Panc1 (cell line): ENCODE measurements at regions of chr19 and their contacts with region 1.

Region 1: GRCh38 chr19:39671738-39672363 is 16.1 kb downstream of the LGALS16 start:
- DNase-seq: peak; percentile 100
- ATAC-seq: peak; percentile 95
- H3K4me3 ChIP-seq: no peak overlapping the region
- H3K27ac ChIP-seq: no peak overlapping the region
- H3K4me1 ChIP-seq: peaks cover 11% of the 10 kb centered on the region
- H3K27me3 ChIP-seq: peaks cover 57% of the 10 kb centered on the region
- CTCF ChIP-seq: no peak

Region 2: DNA sequence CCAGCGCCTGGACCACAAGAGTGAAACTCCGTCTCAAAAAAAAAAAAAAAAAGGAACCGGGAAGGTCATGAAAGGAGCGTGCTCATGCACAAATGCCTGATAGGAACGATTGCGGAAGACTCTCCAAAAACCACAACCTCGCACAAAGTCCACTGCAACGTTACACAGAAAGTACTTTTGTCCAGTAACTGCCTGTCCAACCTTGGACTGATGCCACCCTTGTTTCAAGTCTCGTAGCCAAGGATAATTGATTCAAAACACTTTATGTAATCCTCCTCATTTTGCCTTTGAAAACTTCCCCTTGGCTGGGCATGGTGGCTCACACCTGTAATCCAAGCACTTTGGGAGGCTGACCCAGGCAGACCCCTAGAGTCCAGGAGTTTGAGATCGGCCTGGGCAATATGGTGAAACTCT is 912.3 kb before region 1 on chr19:
- CTCF ChIA-PET with region 1: no interaction called
- POLR2A ChIA-PET with region 1: no interaction called
- in situ Hi-C with region 1: no loop called
- intact Hi-C with region 1: no loop called
- DNase-seq: no peak
- ATAC-seq: no peak
- H3K4me3 ChIP-seq: no peak overlapping the region
- H3K27ac ChIP-seq: no peak overlapping the region
- H3K4me1 ChIP-seq: no peaks in the 10 kb centered on the region
- H3K27me3 ChIP-seq: no peaks in the 10 kb centered on the region
- CTCF ChIP-seq: no peak

Region 3: DNA sequence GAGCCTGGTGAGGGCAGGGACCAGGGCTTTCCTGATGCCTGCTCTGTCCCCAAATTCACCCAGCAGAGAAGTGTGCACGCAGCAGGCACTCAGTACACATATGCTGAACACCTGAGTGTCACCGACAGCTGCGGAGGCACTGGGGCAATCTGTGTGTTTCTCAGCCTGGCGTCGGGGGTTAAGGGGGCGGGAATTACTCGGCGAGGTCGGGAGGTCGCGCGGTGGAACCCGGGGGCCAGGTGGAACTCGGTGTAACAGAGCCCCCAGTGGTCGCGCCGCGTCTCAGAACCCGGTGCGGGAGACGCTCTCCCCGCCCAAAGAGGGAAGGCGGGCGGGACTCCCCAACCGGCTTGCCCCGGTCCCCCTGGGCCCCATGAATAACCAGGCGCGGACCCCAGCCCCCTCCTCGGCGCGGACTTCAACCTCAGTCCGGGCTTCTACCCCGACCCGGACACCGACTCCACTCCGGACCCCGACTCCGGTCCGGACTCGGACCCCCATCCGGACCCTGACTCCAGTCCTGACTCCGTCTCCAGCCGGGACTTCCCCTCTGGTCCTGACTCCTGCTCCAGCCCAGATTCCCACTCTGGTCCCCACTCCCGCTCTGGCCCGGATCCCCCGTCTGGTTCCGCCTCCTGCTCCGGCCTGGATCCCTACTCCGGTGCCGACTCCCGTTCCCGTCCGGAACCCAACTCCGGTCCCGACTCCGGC is 156.9 kb before region 1 on chr19 and contains the start of gene SELENOV:
- CTCF ChIA-PET with region 1: interaction called, 13 read pairs
- POLR2A ChIA-PET with region 1: interaction called, 3 read pairs
- in situ Hi-C with region 1: no loop called
- intact Hi-C with region 1: no loop called
- DNase-seq: no peak
- ATAC-seq: peak; percentile 56
- H3K4me3 ChIP-seq: peak within 1 kb of the TSS; percentile 30 to 55
- H3K27ac ChIP-seq: peak within 1 kb of the TSS; percentile 5
- H3K4me1 ChIP-seq: peaks cover 26% of the 10 kb centered on the region
- H3K27me3 ChIP-seq: peaks cover 23% of the 10 kb centered on the region
- CTCF ChIP-seq: no peak
- total RNA-seq, gene SELENOV: 0.80 TPM

Region 4: DNA sequence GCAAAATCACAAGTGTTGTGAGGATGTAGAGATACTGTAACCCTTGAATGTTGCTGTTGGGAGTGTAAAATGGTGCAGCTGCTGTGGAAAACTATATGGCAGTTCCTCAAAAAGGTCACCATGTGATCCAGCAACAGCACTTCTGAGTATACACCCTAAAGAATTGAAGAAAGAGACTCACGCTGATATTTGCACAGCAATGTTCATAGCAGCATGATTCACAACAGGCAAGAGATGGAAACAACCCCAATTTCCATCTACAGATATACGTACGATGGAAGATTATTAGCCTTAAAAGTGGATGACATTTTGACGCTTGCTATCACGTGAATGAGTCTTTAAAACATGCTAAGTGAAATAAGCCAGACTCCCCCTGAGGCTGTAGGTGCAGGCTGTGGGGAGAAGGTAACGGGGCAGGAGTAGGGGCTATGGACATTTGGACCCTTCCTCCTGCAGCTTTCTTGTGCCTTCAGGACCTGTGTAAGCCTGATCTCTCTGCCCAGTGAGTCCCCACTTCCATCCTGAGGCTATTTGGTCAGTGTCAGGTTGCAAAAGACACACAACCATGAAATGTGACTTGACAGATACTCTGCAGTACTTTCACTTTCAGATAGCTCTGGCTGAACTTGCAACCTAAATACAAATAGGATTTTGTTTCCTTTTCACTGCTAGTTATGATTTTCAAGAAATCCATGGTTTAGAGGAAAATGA is 114.3 kb before region 1 on chr19:
- CTCF ChIA-PET with region 1: interaction called, 508 read pairs
- POLR2A ChIA-PET with region 1: no interaction called
- in situ Hi-C with region 1: no loop called
- intact Hi-C with region 1: no loop called
- DNase-seq: peak; percentile 91
- ATAC-seq: peak; percentile 82
- H3K4me3 ChIP-seq: peak overlapping the region; percentile 0 to 36; a peak in 3 of 4 replicates
- H3K27ac ChIP-seq: peak overlapping the region; percentile 0; the same call in 1 of the 2 replicates
- H3K4me1 ChIP-seq: peaks cover 17% of the 10 kb centered on the region
- H3K27me3 ChIP-seq: peaks cover 43% of the 10 kb centered on the region
- CTCF ChIP-seq: no peak

Region 5: DNA sequence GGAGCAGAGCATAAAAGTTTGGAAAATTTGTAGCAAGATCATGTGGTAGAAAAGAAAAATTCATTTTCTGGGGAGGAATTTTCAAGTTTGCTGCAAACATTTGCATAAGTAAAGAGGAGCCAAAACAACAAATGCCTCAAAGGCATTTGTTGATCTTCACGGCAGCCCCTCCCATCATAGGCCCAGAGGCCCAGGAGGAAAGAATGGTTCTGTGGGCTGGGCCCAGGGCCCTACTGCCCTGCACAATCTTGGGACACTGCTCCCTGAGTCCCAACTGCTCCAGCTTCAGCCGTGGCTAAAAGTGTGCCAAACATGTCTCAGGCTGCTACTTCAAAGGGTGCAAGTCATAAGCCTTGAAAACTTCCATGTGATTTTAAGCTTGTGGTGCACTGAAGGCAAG is 58.3 kb before region 1 on chr19:
- CTCF ChIA-PET with region 1: no interaction called
- POLR2A ChIA-PET with region 1: no interaction called
- in situ Hi-C with region 1: no loop called
- intact Hi-C with region 1: no loop called
- DNase-seq: no peak
- ATAC-seq: no peak
- H3K4me3 ChIP-seq: no peak overlapping the region
- H3K27ac ChIP-seq: no peak overlapping the region
- H3K4me1 ChIP-seq: no peaks in the 10 kb centered on the region
- H3K27me3 ChIP-seq: peaks cover 48% of the 10 kb centered on the region
- CTCF ChIP-seq: no peak

Region 6: GRCh38 chr19:39641773-39642172 is 30.1 kb before region 1 on chr19:
- CTCF ChIA-PET with region 1: no interaction called
- POLR2A ChIA-PET with region 1: interaction called, 12 read pairs
- in situ Hi-C with region 1: loop called (anchors 5 kb)
- intact Hi-C with region 1: no loop called
- DNase-seq: no peak
- ATAC-seq: no peak
- H3K4me3 ChIP-seq: no peak overlapping the region
- H3K27ac ChIP-seq: no peak overlapping the region
- H3K4me1 ChIP-seq: no peaks in the 10 kb centered on the region
- H3K27me3 ChIP-seq: peaks cover 86% of the 10 kb centered on the region
- CTCF ChIP-seq: peak; percentile 40; the same call in 1 of the 2 replicates

Region 7: DNA sequence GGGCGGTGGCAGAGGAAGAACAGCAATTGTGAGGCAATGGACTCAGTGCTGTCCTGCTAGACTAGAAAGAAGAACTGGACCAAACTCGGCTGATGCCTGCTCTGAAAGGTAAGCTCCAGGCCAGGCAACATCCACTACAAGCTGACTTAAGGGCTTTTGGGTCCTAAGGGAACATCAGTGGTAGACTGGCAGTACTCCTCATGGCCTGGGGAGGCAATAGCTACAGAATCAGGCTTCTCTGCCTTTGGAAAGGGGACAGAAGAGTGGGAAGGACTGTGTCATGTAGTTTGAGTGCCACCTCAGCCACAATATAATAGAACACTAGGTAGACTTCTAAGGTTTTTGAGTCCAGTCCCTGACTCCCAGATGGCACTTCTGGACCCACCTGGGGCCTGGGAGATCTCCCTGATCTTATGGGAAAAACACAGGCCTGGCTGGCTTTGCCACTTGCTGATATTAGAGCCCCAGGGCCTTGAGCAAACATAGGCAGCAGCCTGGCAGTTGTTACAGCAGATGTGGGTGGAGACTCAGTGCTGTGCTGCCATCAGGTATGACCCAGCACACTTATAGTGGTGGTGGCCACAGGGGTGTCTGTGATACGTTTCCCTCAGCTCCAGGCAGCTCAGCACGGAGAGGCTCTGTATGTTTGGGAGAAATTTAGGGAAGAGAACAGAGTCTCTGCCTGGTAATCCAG is 75.1 kb after region 1 on chr19:
- CTCF ChIA-PET with region 1: interaction called, 5 read pairs
- POLR2A ChIA-PET with region 1: no interaction called
- in situ Hi-C with region 1: loop called (anchors 5 kb)
- intact Hi-C with region 1: no loop called
- DNase-seq: no peak
- ATAC-seq: peak; percentile 83
- H3K4me3 ChIP-seq: no peak overlapping the region
- H3K27ac ChIP-seq: no peak overlapping the region
- H3K4me1 ChIP-seq: no peaks in the 10 kb centered on the region
- H3K27me3 ChIP-seq: peaks cover 92% of the 10 kb centered on the region
- CTCF ChIP-seq: no peak

Region 8: GRCh38 chr19:40013991-40014390 is 342.1 kb after region 1 on chr19:
- CTCF ChIA-PET with region 1: no interaction called
- POLR2A ChIA-PET with region 1: no interaction called
- in situ Hi-C with region 1: no loop called
- intact Hi-C with region 1: no loop called
- DNase-seq: no peak
- ATAC-seq: no peak
- H3K4me3 ChIP-seq: no peak overlapping the region
- H3K27ac ChIP-seq: no peak overlapping the region
- H3K4me1 ChIP-seq: no peaks in the 10 kb centered on the region
- H3K27me3 ChIP-seq: no peaks in the 10 kb centered on the region
- CTCF ChIP-seq: no peak